Activated naive CD4-positive, alpha-beta T cell treated with anti-CD3 and anti-CD28 coated beads for 36 hours (primary cell): ENCODE measurements at regions of chr11 and their contacts with region 1.

Region 1: GRCh38 chr11:35144136-35144741 is 5.3 kb downstream of the CD44 start:
- DNase-seq: peak; percentile 87
- H3K4me3 Mint-ChIP-seq: peak overlapping the region; percentile 55
- H3K27ac Mint-ChIP-seq: peak overlapping the region; percentile 96
- H3K4me1 Mint-ChIP-seq: peaks cover 68% of the 10 kb centered on the region
- H3K27me3 Mint-ChIP-seq: no peaks in the 10 kb centered on the region

Region 2: GRCh38 chr11:34653826-34654490 is 490.3 kb before region 1 on chr11:
- CTCF ChIA-PET with region 1: no interaction called
- intact Hi-C with region 1: loop called (anchors 2 kb)
- DNase-seq: peak; percentile 59
- H3K4me3 Mint-ChIP-seq: no peak overlapping the region
- H3K27ac Mint-ChIP-seq: no peak overlapping the region
- H3K4me1 Mint-ChIP-seq: peaks cover 43% of the 10 kb centered on the region
- H3K27me3 Mint-ChIP-seq: peaks cover 31% of the 10 kb centered on the region

Region 3: DNA sequence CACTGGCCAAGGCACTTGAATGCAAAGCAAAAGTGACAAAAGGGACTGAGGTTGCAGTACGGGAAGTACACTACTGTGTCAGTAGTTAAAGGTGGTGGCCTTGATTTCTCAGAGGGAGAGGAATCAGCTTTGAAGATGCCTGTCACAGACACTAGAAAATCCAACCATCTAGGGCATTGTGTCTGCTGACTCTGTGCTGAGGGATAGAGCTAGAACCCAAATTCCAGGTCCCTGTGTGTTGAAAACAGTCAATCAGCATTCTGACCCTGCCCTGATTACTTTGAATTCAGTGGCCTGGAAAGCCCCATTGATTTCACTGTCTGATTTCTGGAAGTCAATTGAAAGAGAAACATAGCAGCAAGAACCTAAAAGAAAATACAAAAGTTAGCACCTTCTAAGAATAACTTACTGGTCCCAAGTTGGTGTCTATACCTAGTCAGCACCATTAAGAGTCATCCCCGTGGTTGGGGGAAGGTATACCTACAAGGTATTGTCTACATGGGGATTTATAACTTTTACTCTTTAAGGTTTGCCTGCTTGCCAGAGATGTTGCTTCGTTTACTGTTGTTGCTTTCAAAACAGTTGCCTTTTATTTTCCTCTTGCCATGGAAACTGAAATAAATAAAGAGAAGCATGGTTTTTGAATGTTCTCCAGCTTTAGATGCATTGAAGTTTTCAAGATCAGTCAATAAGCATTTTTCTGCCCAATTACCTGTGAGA is 130.6 kb before region 1 on chr11:
- CTCF ChIA-PET with region 1: interaction called, 5 read pairs
- intact Hi-C with region 1: loop called (anchors 1 kb)
- DNase-seq: peak; percentile 71
- H3K4me3 Mint-ChIP-seq: peak overlapping the region; percentile 39
- H3K27ac Mint-ChIP-seq: peak overlapping the region; percentile 93
- H3K4me1 Mint-ChIP-seq: peaks cover 41% of the 10 kb centered on the region
- H3K27me3 Mint-ChIP-seq: peaks cover 4% of the 10 kb centered on the region

Region 4: GRCh38 chr11:35082321-35083182 is 61.7 kb before region 1 on chr11:
- CTCF ChIA-PET with region 1: interaction called, 6 read pairs
- intact Hi-C with region 1: loop called (anchors 1 kb)
- DNase-seq: peak; percentile 89
- H3K4me3 Mint-ChIP-seq: peak overlapping the region; percentile 66
- H3K27ac Mint-ChIP-seq: peak overlapping the region; percentile 90
- H3K4me1 Mint-ChIP-seq: peaks cover 91% of the 10 kb centered on the region
- H3K27me3 Mint-ChIP-seq: no peaks in the 10 kb centered on the region

Region 5: GRCh38 chr11:35182317-35182939 is 38.2 kb after region 1 on chr11:
- CTCF ChIA-PET with region 1: interaction called, 11 read pairs
- intact Hi-C with region 1: loop called (anchors 1 kb)
- DNase-seq: no peak
- H3K4me3 Mint-ChIP-seq: peak overlapping the region; percentile 19
- H3K27ac Mint-ChIP-seq: peak overlapping the region; percentile 75
- H3K4me1 Mint-ChIP-seq: peaks cover 80% of the 10 kb centered on the region
- H3K27me3 Mint-ChIP-seq: no peaks in the 10 kb centered on the region

Region 6: DNA sequence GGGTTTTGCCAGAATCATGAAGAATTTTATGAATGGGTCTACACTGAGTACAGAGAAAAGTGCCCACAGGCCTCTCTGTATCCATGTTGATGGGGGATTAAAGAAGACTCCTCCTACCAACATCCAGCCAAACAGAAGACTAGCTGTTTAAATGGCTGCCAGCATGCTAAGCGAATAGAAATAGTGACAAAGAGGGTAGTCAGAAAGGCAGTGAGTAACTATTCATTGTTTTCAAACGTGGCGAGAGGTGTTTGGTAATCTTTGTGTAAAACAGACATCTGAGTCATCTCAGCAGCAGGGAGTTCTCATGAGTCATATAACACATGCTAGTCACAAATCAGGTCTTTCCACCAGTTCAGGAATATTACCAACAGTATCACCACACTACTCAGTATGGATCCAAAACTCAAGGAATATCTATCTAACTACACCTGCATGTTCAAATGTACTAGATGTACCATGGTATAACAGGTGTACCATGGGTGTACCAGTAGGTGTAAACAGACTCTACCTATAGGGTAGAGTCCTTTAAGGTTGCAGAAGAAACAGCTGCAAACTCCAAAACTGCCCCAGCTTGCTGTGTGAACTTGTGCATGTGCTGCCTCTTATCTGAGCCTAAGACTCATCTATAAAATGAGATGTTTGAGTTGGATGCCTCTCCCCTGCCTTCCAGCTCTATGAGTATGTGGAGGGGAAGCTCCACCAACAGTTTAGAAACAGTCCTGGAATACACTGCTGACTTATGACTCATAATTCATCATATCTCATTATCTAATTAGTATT is 193.1 kb after region 1 on chr11:
- CTCF ChIA-PET with region 1: no interaction called
- intact Hi-C with region 1: loop called (anchors 1 kb)
- DNase-seq: peak; percentile 65
- H3K4me3 Mint-ChIP-seq: no peak overlapping the region
- H3K27ac Mint-ChIP-seq: peak overlapping the region; percentile 82
- H3K4me1 Mint-ChIP-seq: peaks cover 41% of the 10 kb centered on the region
- H3K27me3 Mint-ChIP-seq: no peaks in the 10 kb centered on the region